WTC11 (cell line): ENCODE measurements at regions of chr2 and their contacts with region 1.

Region 1: GRCh38 chr2:85413592-85414421 is 3.6 kb upstream of the CAPG start:
- DNase-seq: peak; percentile 58
- ATAC-seq: peak; percentile 36
- H3K4me3 Mint-ChIP-seq: peak overlapping the region; percentile 93
- H3K27ac Mint-ChIP-seq: peak overlapping the region; percentile 92
- H3K4me1 Mint-ChIP-seq: peaks cover 43% of the 10 kb centered on the region
- H3K27me3 Mint-ChIP-seq: no peaks in the 10 kb centered on the region
- CTCF ChIP-seq: no peak

Region 2: GRCh38 chr2:85390941-85391669 is 22.7 kb before region 1 on chr2:
- CTCF ChIA-PET with region 1: interaction called, 10 read pairs
- POLR2A ChIA-PET with region 1: no interaction called
- DNase-seq: peak; percentile 94
- ATAC-seq: peak; percentile 89
- H3K4me3 Mint-ChIP-seq: no peak overlapping the region
- H3K27ac Mint-ChIP-seq: no peak overlapping the region
- H3K4me1 Mint-ChIP-seq: peaks cover 22% of the 10 kb centered on the region
- H3K27me3 Mint-ChIP-seq: no peaks in the 10 kb centered on the region
- CTCF ChIP-seq: peak; percentile 72